MCF 10A (cell line): ENCODE measurements at regions of chr3 and their contacts with region 1.

Region 1: GRCh38 chr3:185187391-185187790 is 34.5 kb upstream of the C3orf70 start:
- DNase-seq: no peak
- H3K4me3 Mint-ChIP-seq: no peak overlapping the region
- H3K27ac Mint-ChIP-seq: no peak overlapping the region
- H3K4me1 Mint-ChIP-seq: no peaks in the 10 kb centered on the region
- H3K27me3 Mint-ChIP-seq: no peaks in the 10 kb centered on the region
- CTCF ChIP-seq: no peak

Region 2: GRCh38 chr3:184965639-184966430 is 221.6 kb before region 1 on chr3:
- CTCF ChIA-PET with region 1: no interaction called
- POLR2A ChIA-PET with region 1: no interaction called
- intact Hi-C with region 1: no loop called
- DNase-seq: no peak
- H3K4me3 Mint-ChIP-seq: no peak overlapping the region
- H3K27ac Mint-ChIP-seq: no peak overlapping the region
- H3K4me1 Mint-ChIP-seq: no peaks in the 10 kb centered on the region
- H3K27me3 Mint-ChIP-seq: no peaks in the 10 kb centered on the region
- CTCF ChIP-seq: no peak

Region 3: GRCh38 chr3:185176750-185177359 is 10.5 kb before region 1 on chr3:
- CTCF ChIA-PET with region 1: interaction called, 10 read pairs
- POLR2A ChIA-PET with region 1: no interaction called
- intact Hi-C with region 1: no loop called
- DNase-seq: peak; percentile 48
- H3K4me3 Mint-ChIP-seq: no peak overlapping the region
- H3K27ac Mint-ChIP-seq: no peak overlapping the region
- H3K4me1 Mint-ChIP-seq: no peaks in the 10 kb centered on the region
- H3K27me3 Mint-ChIP-seq: no peaks in the 10 kb centered on the region
- CTCF ChIP-seq: peak; percentile 72